ENCODE measurements at regions of chr2 and their contacts with region 1.

Region 1: GRCh38 chr2:173749315-173749714 is 215.9 kb downstream of the SP3 start:
- DNase-seq: no peak
- ATAC-seq: no peak
- H3K4me3 ChIP-seq: no peak overlapping the region
- H3K27ac ChIP-seq: no peak overlapping the region
- H3K4me1 ChIP-seq: peaks cover 0 to 10% (median 1%) of the 10 kb centered on the region in 12 donors
- H3K27me3 ChIP-seq: peaks cover 0 to 7% (median 0%) of the 10 kb centered on the region in 9 donors
- CTCF ChIP-seq: peak in 5 of 12 donors; percentile 20 to 29 (median 24)
- POLR2A ChIP-seq: no peak

Region 2: DNA sequence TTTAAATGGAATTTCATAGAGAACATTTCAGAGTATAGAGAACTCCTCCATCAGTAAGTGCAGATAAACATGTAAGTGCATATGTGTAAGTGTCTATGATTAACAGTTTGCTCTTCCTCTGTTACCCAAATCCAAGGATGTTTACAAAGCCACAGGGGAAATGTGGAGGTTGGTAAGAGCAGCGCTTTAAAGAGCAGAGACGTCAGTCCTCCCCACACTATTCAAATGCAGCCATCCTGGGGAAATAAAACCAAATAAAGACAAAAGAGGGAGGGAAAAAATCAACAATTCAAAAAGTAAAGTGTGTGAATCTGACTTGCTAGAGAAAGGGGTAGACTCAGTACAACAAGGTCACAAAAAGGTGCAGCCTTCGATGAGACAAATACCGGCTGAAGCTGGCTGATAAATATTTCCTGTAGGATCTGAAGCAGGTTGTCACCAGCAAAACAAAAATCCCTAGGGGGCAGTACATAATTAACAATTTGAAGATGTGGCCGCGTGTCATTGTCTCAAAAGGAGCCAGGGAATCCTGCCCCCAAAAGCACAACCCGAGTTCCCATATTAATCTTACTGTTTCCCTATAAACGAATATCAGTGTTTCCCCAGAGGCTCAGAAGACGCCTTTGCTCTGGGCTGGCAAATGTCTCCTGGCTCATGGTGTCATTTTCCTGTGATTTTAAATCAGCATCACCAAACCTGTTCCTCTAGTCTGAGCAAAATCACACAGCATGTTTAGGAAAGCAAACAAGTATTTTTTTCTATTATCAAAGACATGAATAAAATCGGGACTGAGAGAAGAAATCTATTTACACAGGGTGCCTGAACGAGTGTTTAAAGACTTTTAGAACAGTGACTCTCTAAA is 178.1 kb before region 1 on chr2:
- intact Hi-C with region 1: loop called in 1 of 10 experiments (anchors 5 kb)
- DNase-seq: no peak
- ATAC-seq: peak in 3 of 4 donors; percentile 31 to 48 (median 42)
- H3K4me3 ChIP-seq: peak overlapping the region in 1 of 12 donors; percentile 5
- H3K27ac ChIP-seq: no peak overlapping the region
- H3K4me1 ChIP-seq: peaks cover 0 to 10% (median 0%) of the 10 kb centered on the region in 12 donors
- H3K27me3 ChIP-seq: peaks cover 0 to 6% (median 0%) of the 10 kb centered on the region in 9 donors
- CTCF ChIP-seq: peak in 10 of 12 donors; percentile 13 to 51 (median 37)
- POLR2A ChIP-seq: no peak